ENCODE measurements at regions of chr4 and their contacts with region 1.

Region 1: GRCh38 chr4:99324979-99325378 is 3.8 kb upstream of the ADH1B start:
- DNase-seq: peak; percentile 94
- H3K4me3 ChIP-seq: no peak overlapping the region
- H3K27ac ChIP-seq: peak overlapping the region; percentile 78 to 86 (median 81)
- H3K4me1 ChIP-seq: peaks cover 0 to 33% (median 24%) of the 10 kb centered on the region in 4 donors
- H3K27me3 ChIP-seq: no peaks in the 10 kb centered on the region
- CTCF ChIP-seq: no peak
- EP300 ChIP-seq: peak; percentile 83 to 95 (median 86)
- POLR2A ChIP-seq: no peak

Region 2: GRCh38 chr4:99219479-99219878 is 105.5 kb before region 1 on chr4:
- intact Hi-C with region 1: no loop called
- DNase-seq: no peak
- H3K4me3 ChIP-seq: no peak overlapping the region
- H3K27ac ChIP-seq: no peak overlapping the region
- H3K4me1 ChIP-seq: peaks cover 0 to 12% (median 2%) of the 10 kb centered on the region in 4 donors
- H3K27me3 ChIP-seq: no peaks in the 10 kb centered on the region
- CTCF ChIP-seq: no peak
- EP300 ChIP-seq: no peak
- POLR2A ChIP-seq: no peak

Region 3: GRCh38 chr4:99300934-99301333 is 24.0 kb before region 1 on chr4:
- intact Hi-C with region 1: loop called (anchors 1 kb)
- DNase-seq: peak; percentile 98
- H3K4me3 ChIP-seq: no peak overlapping the region
- H3K27ac ChIP-seq: peak overlapping the region; percentile 64 to 79 (median 70)
- H3K4me1 ChIP-seq: peaks cover 0 to 22% (median 17%) of the 10 kb centered on the region in 4 donors
- H3K27me3 ChIP-seq: no peaks in the 10 kb centered on the region
- CTCF ChIP-seq: no peak
- EP300 ChIP-seq: peak; percentile 38 to 91 (median 72)
- POLR2A ChIP-seq: no peak

Region 4: GRCh38 chr4:99349338-99349737 is 24.4 kb after region 1 on chr4:
- intact Hi-C with region 1: no loop called
- DNase-seq: no peak
- H3K4me3 ChIP-seq: no peak overlapping the region
- H3K27ac ChIP-seq: no peak overlapping the region
- H3K4me1 ChIP-seq: peaks cover 0 to 4% (median 0%) of the 10 kb centered on the region in 4 donors
- H3K27me3 ChIP-seq: no peaks in the 10 kb centered on the region
- CTCF ChIP-seq: no peak
- EP300 ChIP-seq: no peak
- POLR2A ChIP-seq: no peak

Region 5: GRCh38 chr4:99383833-99384392 is 58.9 kb after region 1 on chr4:
- intact Hi-C with region 1: loop called (anchors 5 kb)
- DNase-seq: peak; percentile 84
- H3K4me3 ChIP-seq: no peak overlapping the region
- H3K27ac ChIP-seq: peak overlapping the region; percentile 71 to 81 (median 75)
- H3K4me1 ChIP-seq: peaks cover 0 to 39% (median 27%) of the 10 kb centered on the region in 4 donors
- H3K27me3 ChIP-seq: no peaks in the 10 kb centered on the region
- CTCF ChIP-seq: no peak
- EP300 ChIP-seq: peak; percentile 18 to 59 (median 38)
- POLR2A ChIP-seq: no peak

Measured in sigmoid colon (tissue), 7 donors.